IMR-90 (cell line): ENCODE measurements at regions of chr1 and their contacts with region 1.

Region 1: DNA sequence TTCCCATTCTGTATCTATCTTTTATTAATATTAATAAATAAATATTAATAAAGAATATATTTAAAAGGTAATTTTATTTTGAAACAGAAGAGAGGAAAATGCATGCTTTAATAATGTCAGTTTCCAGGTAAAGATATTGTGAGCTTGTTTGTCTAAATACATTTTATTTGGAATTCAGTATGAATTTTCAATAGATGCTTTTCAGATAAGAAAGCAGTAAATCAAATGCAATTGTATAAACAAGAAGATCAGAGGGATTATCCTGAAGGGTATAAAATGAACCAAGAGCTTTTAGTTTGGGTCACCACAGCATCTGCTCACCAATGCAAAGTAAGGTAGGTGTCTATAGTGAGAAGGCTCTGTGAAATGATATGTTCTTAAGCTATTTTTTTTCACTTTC is at the start of gene TSHB:
- DNase-seq: no peak
- ATAC-seq: no peak
- H3K4me3 ChIP-seq: no peak within 1 kb of the TSS
- H3K27ac ChIP-seq: no peak within 1 kb of the TSS
- H3K4me1 ChIP-seq: no peaks in the 10 kb centered on the region
- H3K27me3 ChIP-seq: no peaks in the 10 kb centered on the region; the same call in 1 of the 2 replicates
- CTCF ChIP-seq: no peak
- POLR2A ChIP-seq: no peak
- RAD21 ChIP-seq: no peak
- total RNA-seq, gene TSHB: not detected in 2 replicates

Region 2: GRCh38 chr1:114986286-114986685 is 43.2 kb before region 1 on chr1:
- CTCF ChIA-PET with region 1: no interaction called
- POLR2A ChIA-PET with region 1: no interaction called
- dilution Hi-C with region 1: no loop called
- in situ Hi-C with region 1: no loop called
- intact Hi-C with region 1: loop called (anchors 5 kb)
- DNase-seq: no peak
- ATAC-seq: no peak
- H3K4me3 ChIP-seq: no peak overlapping the region
- H3K27ac ChIP-seq: no peak overlapping the region
- H3K4me1 ChIP-seq: no peaks in the 10 kb centered on the region
- H3K27me3 ChIP-seq: no peaks in the 10 kb centered on the region
- CTCF ChIP-seq: no peak
- POLR2A ChIP-seq: no peak
- RAD21 ChIP-seq: no peak

Region 3: DNA sequence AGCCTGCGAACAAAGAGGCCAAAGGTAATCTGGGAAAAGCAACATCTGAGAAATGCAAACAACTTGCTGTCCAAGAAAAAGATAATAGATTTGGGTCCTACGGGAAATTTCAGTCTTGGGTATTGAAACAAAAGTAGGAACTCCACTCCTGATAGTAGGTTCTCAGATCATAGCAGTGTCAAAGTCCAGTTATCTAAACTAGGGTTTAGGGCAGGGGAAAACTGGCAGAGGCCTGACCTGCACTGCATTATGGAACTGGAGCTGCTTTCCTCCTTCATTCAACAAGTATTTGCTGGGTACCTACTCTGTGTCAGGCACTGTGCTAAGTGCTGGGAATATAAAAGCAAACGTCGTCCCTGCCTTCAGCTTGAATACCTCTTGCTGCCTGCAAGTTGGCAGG is 369.2 kb after region 1 on chr1:
- CTCF ChIA-PET with region 1: no interaction called
- POLR2A ChIA-PET with region 1: no interaction called
- dilution Hi-C with region 1: no loop called
- in situ Hi-C with region 1: no loop called
- intact Hi-C with region 1: no loop called
- DNase-seq: no peak
- ATAC-seq: no peak
- H3K4me3 ChIP-seq: no peak overlapping the region
- H3K27ac ChIP-seq: no peak overlapping the region
- H3K4me1 ChIP-seq: no peaks in the 10 kb centered on the region
- H3K27me3 ChIP-seq: no peaks in the 10 kb centered on the region
- CTCF ChIP-seq: no peak
- POLR2A ChIP-seq: no peak
- RAD21 ChIP-seq: no peak